WTC11 (cell line): ENCODE measurements at regions of chr3 and their contacts with region 1.

Region 1: GRCh38 chr3:50862221-50862620 is 187.5 kb downstream of the DOCK3 start:
- DNase-seq: no peak
- ATAC-seq: peak; percentile 97
- H3K4me3 Mint-ChIP-seq: no peak overlapping the region
- H3K27ac Mint-ChIP-seq: no peak overlapping the region
- H3K4me1 Mint-ChIP-seq: peaks cover 15% of the 10 kb centered on the region
- H3K27me3 Mint-ChIP-seq: no peaks in the 10 kb centered on the region
- CTCF ChIP-seq: no peak

Region 2: DNA sequence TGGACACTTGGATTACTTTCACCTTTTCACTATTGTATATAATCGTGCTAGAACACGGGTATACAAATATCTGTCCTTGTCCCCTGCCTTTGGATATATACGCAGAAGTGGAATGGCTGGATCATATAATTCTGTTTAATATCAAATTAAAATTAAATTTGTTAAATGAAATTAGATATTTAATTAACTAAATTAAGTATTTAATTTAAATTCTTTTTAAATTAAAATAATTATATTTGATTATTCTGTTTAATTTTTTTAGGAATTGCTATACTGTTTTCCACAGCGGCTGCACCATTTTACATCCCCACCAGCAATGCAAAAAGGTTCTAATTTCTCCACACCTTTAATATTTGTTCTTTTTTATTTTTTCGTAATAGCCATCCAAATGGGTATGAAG is 103.2 kb before region 1 on chr3:
- CTCF ChIA-PET with region 1: no interaction called
- POLR2A ChIA-PET with region 1: no interaction called
- DNase-seq: no peak
- ATAC-seq: no peak
- H3K4me3 Mint-ChIP-seq: no peak overlapping the region
- H3K27ac Mint-ChIP-seq: no peak overlapping the region
- H3K4me1 Mint-ChIP-seq: no peaks in the 10 kb centered on the region
- H3K27me3 Mint-ChIP-seq: no peaks in the 10 kb centered on the region
- CTCF ChIP-seq: no peak

Region 3: DNA sequence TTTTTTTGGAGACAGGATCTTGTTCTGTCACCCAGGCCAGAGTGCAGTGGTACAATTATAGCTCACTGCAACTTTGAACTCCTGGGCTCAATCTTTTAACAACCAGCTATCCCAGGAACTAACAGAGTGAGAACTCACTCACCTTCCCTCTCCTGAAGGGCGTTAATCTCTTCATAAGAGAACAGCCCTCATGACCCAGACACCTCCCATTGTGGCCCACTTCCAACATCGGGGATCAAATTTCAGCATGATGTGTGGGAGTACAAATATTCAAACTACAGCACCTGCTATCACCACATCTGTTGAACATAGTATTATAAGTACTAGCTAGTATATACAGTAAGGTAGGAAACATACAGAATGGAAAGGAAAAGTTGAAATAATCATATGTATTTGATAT is 55.0 kb before region 1 on chr3:
- CTCF ChIA-PET with region 1: no interaction called
- POLR2A ChIA-PET with region 1: no interaction called
- DNase-seq: no peak
- ATAC-seq: no peak
- H3K4me3 Mint-ChIP-seq: no peak overlapping the region
- H3K27ac Mint-ChIP-seq: peak overlapping the region; percentile 57; the same call in 1 of the 2 replicates
- H3K4me1 Mint-ChIP-seq: peaks cover 18% of the 10 kb centered on the region
- H3K27me3 Mint-ChIP-seq: peaks cover 4% of the 10 kb centered on the region; the same call in 1 of the 2 replicates
- CTCF ChIP-seq: no peak

Region 4: DNA sequence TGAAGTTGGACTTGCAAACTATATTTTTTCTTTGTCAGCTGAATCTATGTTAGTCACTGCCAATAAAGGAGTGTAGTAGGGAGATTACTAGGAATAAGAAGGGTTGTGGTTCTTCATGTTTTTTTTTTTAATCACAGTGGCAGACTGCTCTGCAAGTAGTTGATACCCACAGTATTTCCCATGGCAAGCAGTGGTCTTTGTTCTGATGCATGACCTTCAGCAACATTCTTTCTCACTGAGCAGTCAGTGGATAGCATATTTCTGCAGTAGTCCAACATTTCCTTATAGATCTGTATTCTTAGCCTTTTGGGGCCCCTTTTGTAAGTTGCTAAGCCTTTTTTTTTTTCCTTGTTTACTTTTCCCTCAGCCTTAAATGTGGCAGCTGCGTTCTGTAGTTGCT is 36.4 kb before region 1 on chr3:
- CTCF ChIA-PET with region 1: no interaction called
- POLR2A ChIA-PET with region 1: no interaction called
- DNase-seq: no peak
- ATAC-seq: no peak
- H3K4me3 Mint-ChIP-seq: no peak overlapping the region
- H3K27ac Mint-ChIP-seq: no peak overlapping the region
- H3K4me1 Mint-ChIP-seq: peaks cover 21% of the 10 kb centered on the region
- H3K27me3 Mint-ChIP-seq: no peaks in the 10 kb centered on the region
- CTCF ChIP-seq: no peak

Region 5: GRCh38 chr3:50840983-50841489 is 21.2 kb before region 1 on chr3:
- CTCF ChIA-PET with region 1: no interaction called
- POLR2A ChIA-PET with region 1: interaction called, 11 read pairs
- DNase-seq: no peak
- ATAC-seq: peak; percentile 51; the same call in 1 of the 2 replicates
- H3K4me3 Mint-ChIP-seq: no peak overlapping the region
- H3K27ac Mint-ChIP-seq: no peak overlapping the region; the same call in 1 of the 2 replicates
- H3K4me1 Mint-ChIP-seq: peaks cover 23% of the 10 kb centered on the region
- H3K27me3 Mint-ChIP-seq: no peaks in the 10 kb centered on the region; the same call in 1 of the 2 replicates
- CTCF ChIP-seq: no peak

Region 6: DNA sequence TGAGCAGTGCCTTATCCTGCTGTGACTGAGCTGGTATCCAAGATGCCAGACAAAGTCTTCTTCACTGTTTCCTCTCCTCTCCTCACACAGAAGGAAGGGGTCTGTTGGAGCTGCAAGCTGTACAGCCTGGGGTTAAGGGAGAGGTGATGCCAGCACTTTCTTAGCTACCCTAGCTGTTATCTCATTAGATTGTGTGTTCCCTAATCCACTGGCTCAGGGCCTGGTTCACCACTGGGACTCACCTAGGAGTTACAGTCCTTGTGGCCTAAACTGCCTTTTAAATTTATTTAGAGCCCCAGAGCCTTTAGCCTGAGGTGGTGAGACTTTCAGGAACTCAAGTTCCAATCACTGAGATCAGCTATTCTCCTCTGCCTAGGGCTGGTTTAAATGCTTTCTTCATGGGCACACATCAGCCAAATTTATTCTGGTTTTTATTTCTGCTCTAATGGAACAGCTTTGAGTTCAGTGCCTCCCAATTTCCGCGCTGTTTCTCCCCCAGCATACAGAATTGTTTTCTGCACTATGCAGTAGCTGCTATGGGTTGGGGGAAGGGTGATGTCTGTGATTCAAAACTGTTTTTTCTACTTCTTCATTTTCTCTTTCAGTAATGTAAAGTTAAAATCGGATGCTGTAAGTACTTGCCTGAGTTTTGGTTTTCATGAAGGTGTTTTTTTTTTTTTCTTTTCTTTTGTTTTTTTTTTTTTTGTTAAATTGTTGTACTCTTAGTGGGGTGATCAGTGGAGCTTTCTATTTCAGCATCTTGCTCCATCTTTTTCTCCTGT is 11.3 kb after region 1 on chr3:
- CTCF ChIA-PET with region 1: interaction called, 3 read pairs
- POLR2A ChIA-PET with region 1: interaction called, 10 read pairs
- DNase-seq: no peak
- ATAC-seq: 0 out of 2 replicates have a peak, but pooled peaks have one; percentile 44
- H3K4me3 Mint-ChIP-seq: no peak overlapping the region
- H3K27ac Mint-ChIP-seq: no peak overlapping the region
- H3K4me1 Mint-ChIP-seq: peaks cover 19% of the 10 kb centered on the region
- H3K27me3 Mint-ChIP-seq: no peaks in the 10 kb centered on the region; the same call in 1 of the 2 replicates
- CTCF ChIP-seq: no peak